Gastrocnemius medialis (tissue), 4 donors: ENCODE measurements at regions of chr3 and their contacts with region 1.

Region 1: GRCh38 chr3:195259475-195260279 is 11.3 kb downstream of the XXYLT1 start:
- DNase-seq: peak; percentile 63 to 84
- ATAC-seq: peak; percentile 82 to 83
- H3K4me3 ChIP-seq: peak overlapping the region; percentile 59 to 81 (median 75)
- H3K27ac ChIP-seq: peak overlapping the region; percentile 78 to 87 (median 84)
- H3K4me1 ChIP-seq: peaks cover 10 to 22% of the 10 kb centered on the region in 2 donors
- H3K27me3 ChIP-seq: no peaks in the 10 kb centered on the region
- CTCF ChIP-seq: peak in 4 of 5 experiments; percentile 98 to 100 (median 99)
- POLR2A ChIP-seq: peak; percentile 60 to 67

Region 2: GRCh38 chr3:194671900-194672808 is 587.5 kb before region 1 on chr3 and contains the start of gene LSG1:
- in situ Hi-C with region 1: loop called in 2 of 4 experiments (anchors 10 kb)
- intact Hi-C with region 1: loop called (anchors 2 kb)
- DNase-seq: peak; percentile 84 to 88
- ATAC-seq: peak; percentile 98
- H3K4me3 ChIP-seq: peak within 1 kb of the TSS; percentile 66 to 95 (median 87)
- H3K27ac ChIP-seq: peak within 1 kb of the TSS; percentile 83 to 91 (median 88)
- H3K4me1 ChIP-seq: peaks cover 32 to 33% of the 10 kb centered on the region in 2 donors
- H3K27me3 ChIP-seq: no peaks in the 10 kb centered on the region
- CTCF ChIP-seq: no peak
- POLR2A ChIP-seq: peak; percentile 49 to 64
- total RNA-seq, gene LSG1: 23.2 to 38.4 (median 28.0) TPM

Region 3: GRCh38 chr3:195001961-195002861 is 257.5 kb before region 1 on chr3:
- in situ Hi-C with region 1: loop called in 1 of 4 experiments (anchors 25 kb)
- intact Hi-C with region 1: loop called (anchors 1 kb)
- DNase-seq: peak in 1 of 2 donors; percentile 24
- ATAC-seq: peak; percentile 33 to 42
- H3K4me3 ChIP-seq: no peak overlapping the region
- H3K27ac ChIP-seq: peak overlapping the region; percentile 25 to 52 (median 39)
- H3K4me1 ChIP-seq: peaks cover 22% of the 10 kb centered on the region in 2 donors
- H3K27me3 ChIP-seq: no peaks in the 10 kb centered on the region
- CTCF ChIP-seq: peak; percentile 41 to 67 (median 51)
- POLR2A ChIP-seq: no peak

Region 4: DNA sequence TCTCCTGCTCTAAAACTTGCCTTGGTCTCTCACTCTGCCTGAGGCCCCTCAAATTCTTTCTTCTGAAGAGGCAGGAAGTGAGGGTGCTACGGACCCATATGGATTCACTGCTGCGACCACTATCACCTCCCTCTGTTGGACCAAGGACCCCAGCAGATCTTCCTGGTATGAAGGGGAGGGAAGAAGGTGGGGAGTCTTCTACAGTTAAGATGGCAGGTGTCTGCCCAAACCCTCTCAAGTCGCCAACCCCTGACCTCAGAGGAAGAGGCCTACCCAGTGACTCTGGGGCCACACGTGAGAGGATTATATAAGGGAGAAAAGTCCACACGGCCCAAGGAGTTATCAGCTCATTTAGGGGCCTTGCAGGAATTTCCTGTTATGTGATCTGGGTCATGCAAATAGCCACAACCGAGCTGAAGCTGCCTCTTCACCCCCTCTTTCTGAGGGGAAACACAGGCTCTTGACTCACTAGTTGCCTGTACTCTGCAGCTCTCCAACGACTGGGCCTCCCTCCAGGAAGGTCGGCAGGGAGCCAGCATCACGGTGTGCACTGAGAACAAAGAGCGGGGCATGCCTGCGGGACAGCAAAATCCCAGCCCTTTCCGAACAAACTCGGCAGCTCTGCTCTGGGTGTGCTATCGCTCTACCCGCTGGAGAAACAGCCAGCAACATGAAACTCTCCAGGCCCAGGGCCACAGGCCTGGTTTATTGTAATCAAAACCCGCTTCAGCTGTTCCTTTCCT is 104.7 kb before region 1 on chr3:
- in situ Hi-C with region 1: loop called in 1 of 4 experiments (anchors 10 kb)
- intact Hi-C with region 1: no loop called
- DNase-seq: peak; percentile 43 to 72
- ATAC-seq: peak; percentile 76 to 81
- H3K4me3 ChIP-seq: peak overlapping the region in 2 of 4 donors; percentile 16
- H3K27ac ChIP-seq: peak overlapping the region; percentile 67 to 78 (median 78)
- H3K4me1 ChIP-seq: peaks cover 45 to 59% of the 10 kb centered on the region in 2 donors
- H3K27me3 ChIP-seq: no peaks in the 10 kb centered on the region
- CTCF ChIP-seq: no peak
- POLR2A ChIP-seq: no peak

Region 5: GRCh38 chr3:195522254-195523023 is 262.8 kb after region 1 on chr3:
- in situ Hi-C with region 1: loop called in 2 of 4 experiments (anchors 10 to 25 kb)
- intact Hi-C with region 1: no loop called
- DNase-seq: no peak
- ATAC-seq: no peak
- H3K4me3 ChIP-seq: no peak overlapping the region
- H3K27ac ChIP-seq: no peak overlapping the region
- H3K4me1 ChIP-seq: peaks cover 0 to 3% of the 10 kb centered on the region in 2 donors
- H3K27me3 ChIP-seq: no peaks in the 10 kb centered on the region
- CTCF ChIP-seq: peak; percentile 65 to 76 (median 74)
- POLR2A ChIP-seq: no peak